Gastrocnemius medialis (tissue), 4 donors: ENCODE measurements at regions of chr9 and their contacts with region 1.

Region 1: DNA sequence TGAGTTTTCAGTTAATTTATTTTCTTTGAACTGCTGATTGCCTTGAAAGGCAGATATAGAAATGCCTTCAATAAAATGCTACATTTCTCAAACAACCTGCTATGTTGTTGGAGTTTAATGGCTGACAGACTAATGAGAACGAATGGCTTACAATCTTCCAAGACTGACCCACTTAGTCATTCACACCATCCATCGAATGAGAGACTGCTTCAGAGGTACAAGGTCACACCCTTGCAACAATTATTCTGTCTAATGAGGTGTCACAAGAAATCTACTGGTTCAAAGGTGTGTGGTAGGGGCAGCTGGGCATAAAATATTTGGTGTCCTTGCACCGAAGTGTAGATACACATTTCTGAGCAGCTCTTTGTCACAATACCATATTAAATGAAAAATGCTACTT is 18.3 kb downstream of the PTPRD start:
- DNase-seq: no peak
- ATAC-seq: no peak
- H3K4me3 ChIP-seq: no peak overlapping the region
- H3K27ac ChIP-seq: no peak overlapping the region
- H3K4me1 ChIP-seq: no peaks in the 10 kb centered on the region
- H3K27me3 ChIP-seq: no peaks in the 10 kb centered on the region
- CTCF ChIP-seq: no peak
- POLR2A ChIP-seq: no peak

Region 2: GRCh38 chr9:10130061-10130675 is 464.3 kb before region 1 on chr9:
- in situ Hi-C with region 1: no loop called
- intact Hi-C with region 1: no loop called
- DNase-seq: no peak
- ATAC-seq: no peak
- H3K4me3 ChIP-seq: no peak overlapping the region
- H3K27ac ChIP-seq: no peak overlapping the region
- H3K4me1 ChIP-seq: no peaks in the 10 kb centered on the region
- H3K27me3 ChIP-seq: no peaks in the 10 kb centered on the region
- CTCF ChIP-seq: no peak
- POLR2A ChIP-seq: no peak

Region 3: DNA sequence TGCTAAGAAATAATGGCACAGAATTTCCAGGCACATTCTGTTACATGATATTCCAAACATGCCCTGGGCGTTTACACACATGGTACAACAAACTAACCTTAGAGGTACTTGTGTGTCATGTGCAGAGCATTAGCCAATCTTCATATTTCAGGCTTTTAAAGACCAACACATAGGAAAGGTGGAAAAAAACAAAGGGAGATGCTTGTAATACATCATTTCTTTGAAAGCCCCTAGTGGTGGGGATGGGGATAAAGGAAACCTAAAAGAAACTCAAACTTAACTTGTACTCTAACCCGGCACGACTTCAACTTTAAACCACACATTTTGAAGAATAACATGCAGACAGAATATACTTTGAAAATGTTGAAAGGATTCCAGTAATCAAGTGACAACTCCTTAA is 115.3 kb before region 1 on chr9:
- in situ Hi-C with region 1: loop called in 1 of 4 experiments (anchors 25 kb)
- intact Hi-C with region 1: no loop called
- DNase-seq: no peak
- ATAC-seq: no peak
- H3K4me3 ChIP-seq: no peak overlapping the region
- H3K27ac ChIP-seq: no peak overlapping the region
- H3K4me1 ChIP-seq: no peaks in the 10 kb centered on the region
- H3K27me3 ChIP-seq: no peaks in the 10 kb centered on the region
- CTCF ChIP-seq: no peak
- POLR2A ChIP-seq: no peak

Region 4: GRCh38 chr9:10855852-10856251 is 261.4 kb after region 1 on chr9:
- in situ Hi-C with region 1: no loop called
- intact Hi-C with region 1: no loop called
- DNase-seq: no peak
- ATAC-seq: no peak
- H3K4me3 ChIP-seq: no peak overlapping the region
- H3K27ac ChIP-seq: no peak overlapping the region
- H3K4me1 ChIP-seq: no peaks in the 10 kb centered on the region
- H3K27me3 ChIP-seq: no peaks in the 10 kb centered on the region
- CTCF ChIP-seq: no peak
- POLR2A ChIP-seq: no peak